Activated CD4-positive, alpha-beta T cell treated with anti-CD3 and anti-CD28 coated beads, Interleukin-2, amount 10 ng/mL, durations not matched to agents 24 days and 14 days (primary cell): ENCODE measurements at regions of chr3 and their contacts with region 1.

Region 1: GRCh38 chr3:149174901-149175300 is 45.5 kb downstream of the HPS3 start:
- DNase-seq: peak; percentile 62
- H3K4me3 Mint-ChIP-seq: no peak overlapping the region
- H3K27ac Mint-ChIP-seq: no peak overlapping the region
- H3K4me1 Mint-ChIP-seq: peaks cover 9% of the 10 kb centered on the region
- H3K27me3 Mint-ChIP-seq: no peaks in the 10 kb centered on the region

Region 2: GRCh38 chr3:149203758-149204157 is 28.9 kb after region 1 on chr3:
- intact Hi-C with region 1: no loop called
- DNase-seq: peak; percentile 66
- H3K4me3 Mint-ChIP-seq: peak overlapping the region; percentile 2
- H3K27ac Mint-ChIP-seq: no peak overlapping the region
- H3K4me1 Mint-ChIP-seq: peaks cover 18% of the 10 kb centered on the region
- H3K27me3 Mint-ChIP-seq: peaks cover 54% of the 10 kb centered on the region

Region 3: GRCh38 chr3:149245738-149246451 is 71.0 kb after region 1 on chr3:
- intact Hi-C with region 1: loop called (anchors 5 kb)
- DNase-seq: peak; percentile 58
- H3K4me3 Mint-ChIP-seq: peak overlapping the region; percentile 55
- H3K27ac Mint-ChIP-seq: peak overlapping the region; percentile 21
- H3K4me1 Mint-ChIP-seq: peaks cover 43% of the 10 kb centered on the region
- H3K27me3 Mint-ChIP-seq: peaks cover 4% of the 10 kb centered on the region

Region 4: DNA sequence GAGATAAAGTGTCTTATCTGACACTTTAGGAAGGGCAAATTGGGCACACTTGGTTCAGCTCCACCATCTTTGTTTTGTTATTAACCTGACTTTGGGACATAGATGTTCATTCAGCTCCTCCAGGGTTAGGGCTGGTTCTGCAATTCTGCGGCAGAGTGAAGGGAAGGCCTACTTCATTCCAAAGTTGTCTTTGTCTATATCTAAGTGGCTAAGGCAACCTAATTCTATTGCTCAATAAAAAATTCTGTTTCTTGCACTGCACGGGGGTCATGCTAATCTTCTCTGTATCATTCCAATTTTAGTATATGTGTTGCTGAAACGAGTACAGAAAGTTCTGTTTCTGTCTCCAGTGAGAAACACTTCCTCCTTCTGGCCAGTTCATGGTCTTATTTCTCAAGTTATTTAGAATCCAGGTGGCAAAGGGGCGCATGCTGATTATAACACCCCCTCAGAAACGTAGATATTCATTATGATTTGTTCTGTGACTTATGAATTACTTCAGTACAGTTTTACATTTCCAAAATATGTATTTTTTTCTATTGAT is 742.3 kb after region 1 on chr3:
- intact Hi-C with region 1: no loop called
- DNase-seq: no peak
- H3K4me3 Mint-ChIP-seq: no peak overlapping the region
- H3K27ac Mint-ChIP-seq: no peak overlapping the region
- H3K4me1 Mint-ChIP-seq: no peaks in the 10 kb centered on the region
- H3K27me3 Mint-ChIP-seq: no peaks in the 10 kb centered on the region

Region 5: DNA sequence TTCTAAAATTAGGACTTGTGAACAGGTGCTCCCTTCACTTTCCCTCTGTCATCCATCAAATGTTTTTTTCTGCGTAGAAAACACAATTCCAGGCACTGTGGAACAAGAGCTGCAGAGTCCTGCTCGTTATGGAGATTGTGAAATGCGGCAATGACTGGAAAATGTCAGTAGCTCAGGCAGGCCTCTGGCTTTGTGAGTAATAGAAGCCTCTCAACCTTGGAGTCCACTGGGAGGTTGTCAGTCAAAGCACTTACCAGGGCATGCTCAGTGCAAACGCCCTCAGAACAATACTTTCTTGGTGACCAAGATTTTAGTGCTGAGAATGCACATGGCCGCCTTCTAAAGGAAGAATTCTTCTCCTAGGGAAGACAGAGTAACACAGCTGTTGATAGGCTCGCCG is 1883.8 kb after region 1 on chr3:
- intact Hi-C with region 1: no loop called
- DNase-seq: no peak
- H3K4me3 Mint-ChIP-seq: no peak overlapping the region
- H3K27ac Mint-ChIP-seq: no peak overlapping the region
- H3K4me1 Mint-ChIP-seq: no peaks in the 10 kb centered on the region
- H3K27me3 Mint-ChIP-seq: peaks cover 13% of the 10 kb centered on the region